HEK293 (cell line): ENCODE measurements at regions of chr9 and their contacts with region 1.

Region 1: GRCh38 chr9:35882263-35882848 is 12.2 kb upstream of the OR13J1 start:
- H3K4me3 ChIP-seq: no peak overlapping the region
- H3K27ac ChIP-seq: no peak overlapping the region
- H3K4me1 ChIP-seq: no peaks in the 10 kb centered on the region
- CTCF ChIP-seq: peak; percentile 41; the same call in 1 of the 2 replicates

Region 2: DNA sequence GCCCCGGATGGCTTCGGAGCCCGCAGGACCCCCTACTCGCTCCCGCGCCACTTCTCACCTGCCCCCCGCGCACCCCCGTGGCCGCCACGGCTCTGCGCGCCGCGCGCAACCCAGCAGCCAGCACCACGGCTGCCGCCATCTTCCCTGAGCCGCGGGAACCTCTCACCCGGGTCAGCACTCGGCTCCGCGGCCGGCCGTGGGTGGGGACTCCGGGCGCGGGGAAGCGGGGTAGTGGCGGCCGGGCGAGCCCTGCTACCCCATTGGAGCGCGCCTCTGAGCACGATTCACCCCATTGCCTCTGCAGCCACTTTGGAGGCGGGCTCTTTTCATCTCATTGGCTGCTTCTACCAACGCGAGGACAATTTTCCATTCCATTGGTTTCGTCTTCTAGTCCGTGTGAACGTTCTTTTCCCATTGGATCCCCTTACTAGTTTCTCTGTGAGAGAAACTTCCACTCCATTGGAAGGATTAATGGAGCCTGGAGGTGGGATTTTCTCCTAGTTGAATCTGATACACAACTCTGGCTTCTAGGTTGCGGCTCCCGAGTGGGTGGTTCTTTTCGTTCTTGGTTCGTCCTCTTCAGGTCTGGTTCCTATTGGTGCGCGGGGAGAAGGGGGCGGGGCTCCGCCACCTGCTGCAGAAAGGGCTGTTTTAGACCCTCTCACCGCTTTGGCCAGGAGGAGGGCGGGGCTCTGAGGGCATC is 67.4 kb before region 1 on chr9 and contains the start of gene HINT2:
- CTCF ChIA-PET with region 1: interaction called, 19 read pairs
- POLR2A ChIA-PET with region 1: interaction called, 5 read pairs
- H3K4me3 ChIP-seq: peak within 1 kb of the TSS; percentile 76
- H3K27ac ChIP-seq: peak within 1 kb of the TSS; percentile 78
- H3K4me1 ChIP-seq: no peaks in the 10 kb centered on the region
- CTCF ChIP-seq: no peak

Region 3: GRCh38 chr9:35835216-35835632 is 47.1 kb before region 1 on chr9:
- CTCF ChIA-PET with region 1: interaction called, 28 read pairs
- POLR2A ChIA-PET with region 1: no interaction called
- H3K4me3 ChIP-seq: no peak overlapping the region
- H3K27ac ChIP-seq: no peak overlapping the region
- H3K4me1 ChIP-seq: no peaks in the 10 kb centered on the region; the same call in 1 of the 2 replicates
- CTCF ChIP-seq: no peak

Region 4: GRCh38 chr9:35903049-35903448 is 20.7 kb after region 1 on chr9:
- CTCF ChIA-PET with region 1: interaction called, 12 read pairs
- POLR2A ChIA-PET with region 1: interaction called, 3 read pairs
- H3K4me3 ChIP-seq: no peak overlapping the region
- H3K27ac ChIP-seq: no peak overlapping the region
- H3K4me1 ChIP-seq: peaks cover 5% of the 10 kb centered on the region
- CTCF ChIP-seq: 0 out of 2 replicates have a peak, but pooled peaks have one; percentile 19

Region 5: DNA sequence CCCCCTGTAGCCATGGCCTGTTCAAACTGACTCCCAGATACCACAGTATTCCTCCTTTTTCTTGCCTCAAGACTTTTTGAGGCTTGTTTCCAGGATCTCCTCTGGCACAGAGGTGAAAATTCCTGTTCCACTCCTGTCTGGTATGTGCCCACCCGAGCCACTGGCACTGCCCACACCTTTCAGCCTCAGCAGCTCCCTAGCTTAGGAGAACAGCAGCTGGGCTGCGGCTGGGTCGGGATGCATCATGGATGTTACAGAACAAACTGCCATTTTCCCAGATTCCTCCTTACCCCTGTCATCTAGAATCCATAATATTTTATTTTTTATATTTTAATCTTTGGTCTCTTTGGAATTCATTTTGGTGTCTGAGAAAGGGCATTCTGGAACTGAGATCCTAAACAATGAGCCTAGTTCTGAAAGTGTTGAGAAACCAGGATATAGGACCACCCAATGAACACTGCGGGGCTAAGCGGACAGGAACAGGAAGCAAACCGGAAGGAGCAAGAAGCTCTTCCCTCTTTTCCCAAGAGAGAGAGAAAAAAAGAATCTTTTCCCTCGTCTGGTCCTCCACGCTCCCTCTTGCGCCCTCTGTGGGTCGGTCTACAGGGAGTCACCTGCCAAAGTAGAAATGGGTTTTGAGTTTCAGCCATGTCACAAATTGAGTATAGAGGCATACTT is 63.1 kb after region 1 on chr9:
- CTCF ChIA-PET with region 1: interaction called, 10 read pairs
- POLR2A ChIA-PET with region 1: no interaction called
- H3K4me3 ChIP-seq: peak overlapping the region; percentile 23
- H3K27ac ChIP-seq: no peak overlapping the region
- H3K4me1 ChIP-seq: no peaks in the 10 kb centered on the region
- CTCF ChIP-seq: peak; percentile 41